MCF 10A (cell line): ENCODE measurements at regions of chr11 and their contacts with region 1.

Region 1: DNA sequence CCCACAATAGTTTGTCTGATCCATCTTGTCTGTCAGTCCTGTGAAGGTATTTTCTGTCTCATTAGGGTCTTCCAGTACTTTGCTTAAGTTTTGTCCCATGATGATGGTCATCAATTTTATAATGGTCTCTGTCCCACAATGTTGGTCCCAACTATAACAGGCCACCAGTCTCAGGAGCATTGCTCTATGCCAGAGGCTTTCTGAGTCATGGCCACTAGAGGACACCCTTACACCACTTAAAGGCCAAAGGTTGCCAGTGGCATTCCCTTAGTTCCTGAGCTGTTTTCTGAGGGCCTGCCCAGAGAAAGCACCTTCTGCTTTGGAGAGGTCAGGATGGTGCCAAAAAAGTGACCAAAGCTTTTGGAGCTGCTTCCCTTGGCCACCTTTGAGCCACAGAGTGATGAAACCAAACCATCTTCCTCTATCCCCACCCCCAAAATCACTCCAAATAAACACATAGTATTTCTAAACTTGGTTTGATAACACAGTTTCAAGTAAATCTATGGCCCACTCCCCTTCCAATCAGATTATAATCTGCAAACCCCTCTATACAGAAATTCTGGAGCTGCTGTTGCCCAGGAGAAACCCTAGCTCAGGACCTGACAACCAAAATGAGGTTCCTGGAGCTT is 19.3 kb downstream of the EIF3F start:
- DNase-seq: peak; percentile 72
- H3K4me3 Mint-ChIP-seq: no peak overlapping the region
- H3K27ac Mint-ChIP-seq: no peak overlapping the region
- H3K4me1 Mint-ChIP-seq: no peaks in the 10 kb centered on the region
- H3K27me3 Mint-ChIP-seq: peaks cover 11% of the 10 kb centered on the region
- CTCF ChIP-seq: peak; percentile 94

Region 2: GRCh38 chr11:7882860-7883259 is 123.6 kb before region 1 on chr11:
- CTCF ChIA-PET with region 1: no interaction called
- POLR2A ChIA-PET with region 1: no interaction called
- intact Hi-C with region 1: no loop called
- DNase-seq: no peak
- H3K4me3 Mint-ChIP-seq: no peak overlapping the region
- H3K27ac Mint-ChIP-seq: no peak overlapping the region
- H3K4me1 Mint-ChIP-seq: no peaks in the 10 kb centered on the region
- H3K27me3 Mint-ChIP-seq: no peaks in the 10 kb centered on the region
- CTCF ChIP-seq: no peak

Region 3: GRCh38 chr11:7965386-7965785 is 41.1 kb before region 1 on chr11 and contains the start of gene NLRP10:
- CTCF ChIA-PET with region 1: no interaction called
- POLR2A ChIA-PET with region 1: no interaction called
- intact Hi-C with region 1: no loop called
- DNase-seq: no peak
- H3K4me3 Mint-ChIP-seq: no peak within 1 kb of the TSS
- H3K27ac Mint-ChIP-seq: peak within 1 kb of the TSS; percentile 50
- H3K4me1 Mint-ChIP-seq: peaks cover 27% of the 10 kb centered on the region
- H3K27me3 Mint-ChIP-seq: no peaks in the 10 kb centered on the region
- CTCF ChIP-seq: no peak
- total RNA-seq, gene NLRP10: 0.42 and 1.3 TPM in 2 replicates

Region 4: GRCh38 chr11:8018484-8019313 is 12.2 kb after region 1 on chr11:
- CTCF ChIA-PET with region 1: interaction called, 46 read pairs
- POLR2A ChIA-PET with region 1: interaction called, 3 read pairs
- intact Hi-C with region 1: no loop called
- DNase-seq: no peak
- H3K4me3 Mint-ChIP-seq: peak overlapping the region; percentile 62
- H3K27ac Mint-ChIP-seq: no peak overlapping the region
- H3K4me1 Mint-ChIP-seq: peaks cover 12% of the 10 kb centered on the region
- H3K27me3 Mint-ChIP-seq: peaks cover 47% of the 10 kb centered on the region
- CTCF ChIP-seq: no peak

Region 5: GRCh38 chr11:8033305-8034105 is 27.0 kb after region 1 on chr11:
- CTCF ChIA-PET with region 1: interaction called, 114 read pairs
- POLR2A ChIA-PET with region 1: no interaction called
- intact Hi-C with region 1: loop called (anchors 1 kb)
- DNase-seq: peak; percentile 75
- H3K4me3 Mint-ChIP-seq: no peak overlapping the region
- H3K27ac Mint-ChIP-seq: no peak overlapping the region
- H3K4me1 Mint-ChIP-seq: peaks cover 5% of the 10 kb centered on the region
- H3K27me3 Mint-ChIP-seq: peaks cover 54% of the 10 kb centered on the region
- CTCF ChIP-seq: peak; percentile 85

Region 6: DNA sequence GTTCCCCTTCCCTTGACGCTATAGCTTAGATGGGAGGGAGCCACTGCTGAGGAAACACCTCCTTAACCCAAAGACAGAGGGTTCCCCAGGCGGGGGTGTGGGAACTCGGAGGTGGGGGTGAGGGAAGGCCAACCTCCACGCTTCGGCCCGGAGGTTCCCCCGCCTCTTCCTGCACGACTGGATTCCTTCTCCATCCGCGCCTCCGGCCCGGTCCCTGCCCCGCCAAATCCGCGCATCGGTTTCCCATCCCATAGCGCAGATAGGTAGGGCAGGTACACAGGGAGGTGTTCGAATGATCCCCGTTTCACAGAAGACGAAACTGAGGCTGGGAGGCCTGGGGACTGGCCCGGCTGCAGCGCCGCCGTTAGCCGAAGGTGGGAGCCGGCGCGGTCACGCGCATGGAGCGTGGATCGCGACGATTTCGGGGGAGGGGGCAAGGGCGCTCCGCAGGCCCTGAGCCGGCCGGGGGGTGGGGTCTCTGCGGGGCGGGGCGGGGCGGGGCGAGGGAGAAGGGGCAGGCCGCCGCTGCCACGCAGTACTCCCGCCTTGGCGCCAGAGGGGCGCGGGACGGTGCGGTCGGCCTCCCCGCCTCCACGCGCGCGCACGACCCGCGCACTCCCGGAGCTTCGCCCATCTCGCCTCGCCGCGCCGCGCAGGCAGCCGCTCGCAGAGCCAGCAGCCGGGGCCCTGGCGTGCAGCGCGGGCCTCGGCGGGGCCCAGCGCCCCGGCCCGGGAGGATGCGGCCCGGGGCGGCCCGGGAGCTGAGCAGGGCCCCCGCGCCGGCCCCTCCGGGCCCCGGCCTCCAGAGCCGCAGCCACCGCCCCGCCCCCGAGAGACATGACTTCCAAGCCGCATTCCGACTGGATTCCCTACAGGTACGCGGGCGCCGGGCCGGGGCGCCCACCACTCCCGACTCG is 74.5 kb after region 1 on chr11 and contains the start of gene TUB:
- CTCF ChIA-PET with region 1: interaction called, 675 read pairs
- POLR2A ChIA-PET with region 1: no interaction called
- intact Hi-C with region 1: no loop called
- DNase-seq: no peak
- H3K4me3 Mint-ChIP-seq: peak within 1 kb of the TSS; percentile 57
- H3K27ac Mint-ChIP-seq: no peak within 1 kb of the TSS
- H3K4me1 Mint-ChIP-seq: no peaks in the 10 kb centered on the region
- H3K27me3 Mint-ChIP-seq: peaks cover 7% of the 10 kb centered on the region
- CTCF ChIP-seq: no peak
- total RNA-seq, gene TUB: 1.4 and 1.8 TPM in 2 replicates

Region 7: DNA sequence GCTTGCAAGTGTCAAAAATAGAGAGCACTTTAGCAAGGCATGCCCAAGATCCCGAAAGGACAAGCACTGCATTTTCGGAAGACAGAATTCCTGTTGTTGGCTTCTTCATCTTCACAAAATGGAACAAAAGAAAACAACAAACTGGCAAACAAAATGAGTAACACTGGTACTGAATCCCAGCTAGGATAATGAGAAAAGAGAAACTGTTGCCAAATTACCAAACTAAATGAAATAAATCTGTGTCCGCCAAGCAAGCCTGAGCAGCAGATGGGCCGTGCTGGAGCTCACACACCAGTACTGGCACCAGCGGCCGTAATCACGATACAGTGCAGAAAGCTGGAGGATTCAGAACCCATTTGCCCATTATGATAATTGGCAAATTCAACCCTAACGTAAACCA is 105.2 kb after region 1 on chr11:
- CTCF ChIA-PET with region 1: interaction called, 18 read pairs
- POLR2A ChIA-PET with region 1: no interaction called
- intact Hi-C with region 1: no loop called
- DNase-seq: no peak
- H3K4me3 Mint-ChIP-seq: no peak overlapping the region
- H3K27ac Mint-ChIP-seq: no peak overlapping the region
- H3K4me1 Mint-ChIP-seq: no peaks in the 10 kb centered on the region
- H3K27me3 Mint-ChIP-seq: no peaks in the 10 kb centered on the region
- CTCF ChIP-seq: no peak

Region 8: DNA sequence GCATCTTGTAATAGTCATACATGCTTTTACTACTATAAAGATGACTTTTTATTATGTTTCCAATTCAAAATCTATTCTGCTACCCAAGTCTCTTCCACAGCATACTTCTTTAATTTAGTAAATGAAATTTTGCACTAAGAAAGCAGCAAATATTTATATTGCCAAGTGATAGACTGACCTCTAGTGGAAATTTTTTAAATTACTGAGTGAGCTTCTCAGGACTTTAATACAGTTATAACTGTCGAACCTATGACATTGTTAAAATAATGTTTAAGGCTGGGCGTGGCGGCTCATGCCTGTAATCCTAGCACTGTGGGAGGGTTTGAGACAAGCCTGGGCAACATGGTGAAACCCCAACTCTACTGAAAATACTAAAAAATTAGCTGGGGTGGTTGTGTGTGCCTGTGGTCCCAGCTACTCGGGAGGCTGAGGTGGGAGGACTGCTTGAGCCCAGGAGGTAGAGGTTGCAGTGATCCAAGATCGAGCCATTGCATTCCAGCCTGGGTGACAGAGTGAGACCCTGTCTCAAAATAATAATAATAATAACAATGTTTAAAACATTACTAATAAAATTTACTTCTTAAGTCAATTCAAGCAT is 560.2 kb after region 1 on chr11:
- CTCF ChIA-PET with region 1: interaction called, 5 read pairs
- POLR2A ChIA-PET with region 1: no interaction called
- intact Hi-C with region 1: loop called (anchors 10 kb)
- DNase-seq: peak; percentile 59
- H3K4me3 Mint-ChIP-seq: no peak overlapping the region
- H3K27ac Mint-ChIP-seq: no peak overlapping the region
- H3K4me1 Mint-ChIP-seq: peaks cover 6% of the 10 kb centered on the region
- H3K27me3 Mint-ChIP-seq: peaks cover 38% of the 10 kb centered on the region
- CTCF ChIP-seq: peak; percentile 64